ENCODE measurements at regions of chr2 and their contacts with region 1.

Region 1: GRCh38 chr2:80238692-80239469 is 65.7 kb downstream of the LRRTM1 start:
- H3K4me3 ChIP-seq: no peak overlapping the region
- H3K27ac ChIP-seq: no peak overlapping the region
- H3K4me1 ChIP-seq: no peaks in the 10 kb centered on the region
- CTCF ChIP-seq: no peak

Region 2: GRCh38 chr2:80073134-80073561 is 165.7 kb before region 1 on chr2:
- CTCF ChIA-PET with region 1: interaction called, 17 read pairs
- POLR2A ChIA-PET with region 1: no interaction called
- H3K4me3 ChIP-seq: no peak overlapping the region
- H3K27ac ChIP-seq: no peak overlapping the region
- H3K4me1 ChIP-seq: no peaks in the 10 kb centered on the region
- CTCF ChIP-seq: no peak